ENCODE measurements at regions of chr20 and their contacts with region 1.

Region 1: GRCh38 chr20:354298-355064 is 7.6 kb downstream of the NRSN2 start:
- DNase-seq: peak; percentile 59
- ATAC-seq: peak; percentile 99
- H3K4me3 ChIP-seq: no peak overlapping the region
- H3K27ac ChIP-seq: no peak overlapping the region
- H3K4me1 ChIP-seq: peaks cover 0 to 8% of the 10 kb centered on the region in 2 experiments; a peak in 3 of 4 replicates
- H3K27me3 ChIP-seq: no peaks in the 10 kb centered on the region
- CTCF ChIP-seq: peak; percentile 90 to 94 (median 91)
- POLR2A ChIP-seq: no peak
- RAD21 ChIP-seq: peak; percentile 99

Region 2: DNA sequence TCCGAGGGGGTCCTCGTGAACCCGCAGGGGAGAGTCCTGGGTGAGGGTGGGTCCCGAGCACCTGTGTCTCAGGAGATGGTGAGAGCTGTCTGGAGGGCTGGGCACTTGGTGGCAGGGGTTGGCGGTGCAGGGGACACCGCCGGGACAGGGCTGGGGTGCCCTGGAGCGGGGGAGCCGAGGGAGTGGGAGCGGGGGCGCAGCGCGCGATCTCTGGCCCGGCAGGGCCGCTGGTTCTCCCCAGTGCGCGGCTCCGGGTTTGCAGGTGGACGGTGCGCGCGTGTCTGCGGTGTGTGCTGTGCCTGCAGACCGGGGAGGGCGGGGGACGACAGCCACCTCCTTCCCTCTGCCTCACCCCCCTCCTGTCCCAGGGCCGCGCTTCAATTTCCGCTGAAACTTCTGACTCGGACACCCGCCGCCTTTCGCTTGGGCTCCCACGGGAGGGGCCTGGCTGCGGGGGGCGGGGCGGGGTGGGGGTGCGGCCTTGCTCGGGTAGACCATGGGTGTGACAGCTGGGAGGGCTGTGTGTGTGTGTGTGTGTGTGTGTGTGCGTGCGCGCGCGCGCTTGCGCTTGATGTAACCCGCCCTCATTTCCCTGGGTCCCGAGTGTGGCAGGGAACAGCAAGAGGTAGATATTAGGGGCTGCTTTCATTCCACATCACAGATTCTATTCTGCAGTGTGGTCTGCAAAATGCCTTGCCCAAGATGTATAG is 27.3 kb after region 1 on chr20:
- CTCF ChIA-PET with region 1: interaction called, 3 read pairs
- POLR2A ChIA-PET with region 1: interaction called, 779 read pairs
- RAD21 ChIA-PET with region 1: no interaction called
- intact Hi-C with region 1: no loop called
- DNase-seq: peak; percentile 61
- ATAC-seq: peak; percentile 70
- H3K4me3 ChIP-seq: peak overlapping the region; percentile 82 to 89
- H3K27ac ChIP-seq: peak overlapping the region; percentile 87
- H3K4me1 ChIP-seq: peaks cover 30 to 32% of the 10 kb centered on the region in 2 experiments
- H3K27me3 ChIP-seq: no peaks in the 10 kb centered on the region
- CTCF ChIP-seq: no peak
- POLR2A ChIP-seq: no peak
- RAD21 ChIP-seq: no peak

Region 3: GRCh38 chr20:431012-431904 is 76.8 kb after region 1 on chr20:
- CTCF ChIA-PET with region 1: interaction called, 29 read pairs
- POLR2A ChIA-PET with region 1: interaction called, 3 read pairs
- RAD21 ChIA-PET with region 1: no interaction called
- intact Hi-C with region 1: loop called (anchors 1 kb)
- DNase-seq: peak; percentile 69
- ATAC-seq: peak; percentile 89
- H3K4me3 ChIP-seq: no peak overlapping the region
- H3K27ac ChIP-seq: no peak overlapping the region
- H3K4me1 ChIP-seq: peaks cover 0 to 5% of the 10 kb centered on the region in 2 experiments; a peak in 1 of 4 replicates
- H3K27me3 ChIP-seq: no peaks in the 10 kb centered on the region
- CTCF ChIP-seq: peak; percentile 83 to 99 (median 91)
- POLR2A ChIP-seq: no peak
- RAD21 ChIP-seq: peak; percentile 86

Region 4: DNA sequence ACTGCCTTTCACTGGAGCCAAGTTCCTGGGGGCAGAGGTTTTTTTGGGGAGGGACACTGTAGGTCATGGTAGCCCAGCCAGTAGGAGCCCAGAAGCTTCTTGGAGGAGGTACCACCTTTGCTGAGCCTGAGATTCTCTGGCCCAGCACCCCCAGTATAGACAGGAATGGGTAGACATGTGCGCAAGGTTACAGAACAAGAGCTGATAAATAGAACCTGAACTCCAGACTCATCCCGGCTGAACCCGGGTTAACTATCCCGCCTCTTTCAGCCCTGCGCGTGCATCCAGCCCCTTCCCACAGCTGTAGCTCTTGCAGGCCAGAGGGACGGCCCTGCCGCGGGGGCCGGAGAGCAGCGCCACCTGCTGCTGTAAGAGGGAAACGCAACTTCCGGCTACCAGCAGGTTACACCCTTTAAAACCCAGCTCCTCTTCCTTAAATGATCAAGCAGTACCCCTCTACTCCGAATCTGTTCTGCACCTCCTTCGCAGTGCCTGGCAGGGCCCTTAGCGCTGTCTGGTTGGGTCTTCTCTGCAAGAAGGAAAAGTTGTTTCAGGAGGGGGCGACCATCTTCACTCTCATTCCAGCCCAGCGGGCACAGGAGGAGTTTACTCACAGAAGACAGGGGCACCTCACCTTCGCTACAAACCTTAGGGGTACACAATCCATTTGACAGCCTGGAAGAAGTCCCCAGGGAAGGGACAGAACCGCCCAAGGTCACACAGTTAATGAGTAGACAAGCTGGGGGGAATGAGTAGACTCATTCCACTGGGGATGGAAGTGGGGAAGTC is 291.0 kb after region 1 on chr20:
- CTCF ChIA-PET with region 1: no interaction called
- POLR2A ChIA-PET with region 1: no interaction called
- RAD21 ChIA-PET with region 1: no interaction called
- intact Hi-C with region 1: loop called (anchors 2 kb)
- DNase-seq: peak; percentile 41
- ATAC-seq: peak; percentile 88
- H3K4me3 ChIP-seq: no peak overlapping the region
- H3K27ac ChIP-seq: peak overlapping the region; percentile 16
- H3K4me1 ChIP-seq: peaks cover 13 to 32% of the 10 kb centered on the region in 2 experiments
- H3K27me3 ChIP-seq: no peaks in the 10 kb centered on the region
- CTCF ChIP-seq: peak; percentile 78 to 94 (median 93)
- POLR2A ChIP-seq: no peak
- RAD21 ChIP-seq: peak; percentile 84

Region 5: DNA sequence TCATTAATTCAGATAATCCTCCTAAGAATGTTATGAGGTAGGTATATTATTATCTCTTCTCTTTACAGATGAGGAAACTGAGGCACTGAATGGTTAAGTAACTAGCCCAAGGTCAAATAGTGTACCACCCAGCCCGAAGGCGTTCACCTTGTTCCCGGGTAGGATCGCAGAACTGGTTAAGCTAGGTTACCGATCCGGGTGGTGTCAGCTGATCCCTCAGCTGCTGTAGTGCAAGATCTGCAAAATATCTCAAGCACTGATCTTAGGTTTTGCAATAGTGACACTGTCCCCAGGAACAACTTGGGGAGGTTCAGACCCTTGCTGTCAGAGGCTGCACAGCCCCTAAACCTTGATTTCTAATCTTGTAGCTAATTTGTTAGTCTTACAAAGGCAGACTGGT is 385.7 kb after region 1 on chr20:
- CTCF ChIA-PET with region 1: interaction called, 8 read pairs
- POLR2A ChIA-PET with region 1: no interaction called
- RAD21 ChIA-PET with region 1: no interaction called
- intact Hi-C with region 1: loop called (anchors 5 kb)
- DNase-seq: no peak
- ATAC-seq: no peak
- H3K4me3 ChIP-seq: no peak overlapping the region
- H3K27ac ChIP-seq: no peak overlapping the region
- H3K4me1 ChIP-seq: peaks cover 0 to 7% of the 10 kb centered on the region in 2 experiments; a peak in 1 of 4 replicates
- H3K27me3 ChIP-seq: no peaks in the 10 kb centered on the region
- CTCF ChIP-seq: no peak
- POLR2A ChIP-seq: no peak
- RAD21 ChIP-seq: no peak